PC-3 (cell line): ENCODE measurements at regions of chr22 and their contacts with region 1.

Region 1: GRCh38 chr22:30196141-30196879 is 50.2 kb downstream of the LIF start:
- DNase-seq: peak; percentile 93
- ATAC-seq: peak; percentile 69
- H3K4me3 ChIP-seq: no peak overlapping the region
- H3K27ac ChIP-seq: peak overlapping the region; percentile 99
- H3K4me1 ChIP-seq: peaks cover 56% of the 10 kb centered on the region
- H3K27me3 ChIP-seq: no peaks in the 10 kb centered on the region
- CTCF ChIP-seq: no peak

Region 2: GRCh38 chr22:30253205-30253852 is 57.0 kb after region 1 on chr22:
- CTCF ChIA-PET with region 1: no interaction called
- POLR2A ChIA-PET with region 1: interaction called, 3 read pairs
- intact Hi-C with region 1: loop called (anchors 1 kb)
- DNase-seq: peak; percentile 83
- ATAC-seq: peak; percentile 2
- H3K4me3 ChIP-seq: peak overlapping the region; percentile 75; the same call in 1 of the 2 replicates
- H3K27ac ChIP-seq: peak overlapping the region; percentile 99
- H3K4me1 ChIP-seq: peaks cover 86% of the 10 kb centered on the region
- H3K27me3 ChIP-seq: no peaks in the 10 kb centered on the region
- CTCF ChIP-seq: no peak